Activated CD4-positive, alpha-beta T cell treated with anti-CD3 and anti-CD28 coated beads, Interleukin-2, amount 10 ng/mL, durations not matched to agents 24 days and 14 days (primary cell): ENCODE measurements at regions of chr15 and their contacts with region 1.

Region 1: GRCh38 chr15:38354315-38354929 is 99.5 kb upstream of the FAM98B start:
- DNase-seq: peak; percentile 81
- H3K4me3 Mint-ChIP-seq: no peak overlapping the region
- H3K27ac Mint-ChIP-seq: no peak overlapping the region
- H3K4me1 Mint-ChIP-seq: no peaks in the 10 kb centered on the region
- H3K27me3 Mint-ChIP-seq: peaks cover 14% of the 10 kb centered on the region

Region 2: GRCh38 chr15:37764733-37765191 is 589.7 kb before region 1 on chr15:
- intact Hi-C with region 1: loop called (anchors 10 kb)
- DNase-seq: peak; percentile 66
- H3K4me3 Mint-ChIP-seq: no peak overlapping the region
- H3K27ac Mint-ChIP-seq: no peak overlapping the region
- H3K4me1 Mint-ChIP-seq: peaks cover 5% of the 10 kb centered on the region
- H3K27me3 Mint-ChIP-seq: no peaks in the 10 kb centered on the region

Region 3: GRCh38 chr15:37995461-37996347 is 358.7 kb before region 1 on chr15:
- intact Hi-C with region 1: loop called (anchors 2 kb)
- DNase-seq: peak; percentile 61
- H3K4me3 Mint-ChIP-seq: no peak overlapping the region
- H3K27ac Mint-ChIP-seq: no peak overlapping the region
- H3K4me1 Mint-ChIP-seq: no peaks in the 10 kb centered on the region
- H3K27me3 Mint-ChIP-seq: peaks cover 4% of the 10 kb centered on the region